H1 (cell line): ENCODE measurements at regions of chr4 and their contacts with region 1.

Region 1: GRCh38 chr4:56448301-56448700 is 12.2 kb downstream of the PAICS start:
- DNase-seq: no peak
- H3K4me3 ChIP-seq: no peak overlapping the region
- H3K27ac ChIP-seq: no peak overlapping the region
- H3K4me1 ChIP-seq: no peaks in the 10 kb centered on the region
- H3K27me3 ChIP-seq: no peaks in the 10 kb centered on the region
- CTCF ChIP-seq: no peak
- EP300 ChIP-seq: no peak
- POLR2A ChIP-seq: no peak
- RAD21 ChIP-seq: no peak

Region 2: GRCh38 chr4:56460085-56460484 is 11.8 kb after region 1 on chr4:
- CTCF ChIA-PET with region 1: interaction called, 4 read pairs
- POLR2A ChIA-PET with region 1: interaction called, 17 read pairs
- DNase-seq: no peak
- H3K4me3 ChIP-seq: no peak overlapping the region
- H3K27ac ChIP-seq: no peak overlapping the region
- H3K4me1 ChIP-seq: no peaks in the 10 kb centered on the region
- H3K27me3 ChIP-seq: no peaks in the 10 kb centered on the region
- CTCF ChIP-seq: no peak
- EP300 ChIP-seq: no peak
- POLR2A ChIP-seq: no peak
- RAD21 ChIP-seq: no peak

Region 3: DNA sequence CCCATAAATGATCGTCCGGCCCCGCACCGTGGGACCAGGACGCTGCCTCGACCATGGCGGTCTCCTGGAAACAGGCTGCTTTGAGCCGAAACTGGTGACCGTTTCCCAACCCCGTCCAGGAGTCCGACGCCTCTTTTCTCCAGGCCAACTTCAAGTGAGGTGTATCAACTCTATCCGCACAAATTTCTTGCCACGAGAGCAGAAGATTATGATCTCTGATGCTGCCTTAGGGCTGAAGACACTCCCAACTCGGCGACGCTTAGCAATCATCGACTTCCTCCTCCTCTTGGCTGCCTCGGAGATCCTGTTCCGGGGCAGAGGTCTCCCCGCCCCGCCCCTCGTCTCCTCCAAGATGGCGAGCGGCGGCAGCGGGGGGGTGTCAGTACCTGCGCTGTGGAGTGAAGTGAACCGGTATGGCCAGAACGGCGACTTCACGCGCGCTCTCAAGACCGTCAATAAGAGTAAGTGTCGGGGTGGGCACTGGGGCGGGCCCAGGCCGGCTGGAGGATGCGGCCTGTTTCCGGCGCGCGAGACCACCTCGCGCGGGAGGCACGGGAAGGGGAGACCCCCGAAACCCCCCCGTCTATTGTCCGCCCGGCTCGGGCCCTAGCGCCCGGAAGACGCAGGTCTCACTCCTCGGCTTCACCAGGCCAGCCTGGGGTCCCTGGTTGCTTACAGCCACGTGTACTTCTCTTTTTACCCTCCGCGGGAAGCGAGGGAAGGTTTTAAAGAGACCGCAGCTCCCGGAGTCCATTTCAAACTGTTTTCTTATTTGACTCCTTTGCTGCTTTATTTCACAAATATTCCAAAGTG is 19.2 kb after region 1 on chr4 and contains the start of gene SRP72:
- CTCF ChIA-PET with region 1: interaction called, 3 read pairs
- POLR2A ChIA-PET with region 1: interaction called, 17 read pairs
- DNase-seq: peak; percentile 46 to 85
- H3K4me3 ChIP-seq: peak within 1 kb of the TSS; percentile 88 to 99 (median 96)
- H3K27ac ChIP-seq: peak within 1 kb of the TSS; percentile 84
- H3K4me1 ChIP-seq: peaks cover 0 to 5% (median 2%) of the 10 kb centered on the region in 4 experiments; a peak in 1 of 7 replicates
- H3K27me3 ChIP-seq: no peaks in the 10 kb centered on the region
- CTCF ChIP-seq: no peak
- EP300 ChIP-seq: no peak
- POLR2A ChIP-seq: peak; percentile 61 to 86
- RAD21 ChIP-seq: no peak
- total RNA-seq, gene SRP72: 139 and 144 TPM in 2 replicates